ENCODE measurements at regions of chr2 and their contacts with region 1.

Region 1: DNA sequence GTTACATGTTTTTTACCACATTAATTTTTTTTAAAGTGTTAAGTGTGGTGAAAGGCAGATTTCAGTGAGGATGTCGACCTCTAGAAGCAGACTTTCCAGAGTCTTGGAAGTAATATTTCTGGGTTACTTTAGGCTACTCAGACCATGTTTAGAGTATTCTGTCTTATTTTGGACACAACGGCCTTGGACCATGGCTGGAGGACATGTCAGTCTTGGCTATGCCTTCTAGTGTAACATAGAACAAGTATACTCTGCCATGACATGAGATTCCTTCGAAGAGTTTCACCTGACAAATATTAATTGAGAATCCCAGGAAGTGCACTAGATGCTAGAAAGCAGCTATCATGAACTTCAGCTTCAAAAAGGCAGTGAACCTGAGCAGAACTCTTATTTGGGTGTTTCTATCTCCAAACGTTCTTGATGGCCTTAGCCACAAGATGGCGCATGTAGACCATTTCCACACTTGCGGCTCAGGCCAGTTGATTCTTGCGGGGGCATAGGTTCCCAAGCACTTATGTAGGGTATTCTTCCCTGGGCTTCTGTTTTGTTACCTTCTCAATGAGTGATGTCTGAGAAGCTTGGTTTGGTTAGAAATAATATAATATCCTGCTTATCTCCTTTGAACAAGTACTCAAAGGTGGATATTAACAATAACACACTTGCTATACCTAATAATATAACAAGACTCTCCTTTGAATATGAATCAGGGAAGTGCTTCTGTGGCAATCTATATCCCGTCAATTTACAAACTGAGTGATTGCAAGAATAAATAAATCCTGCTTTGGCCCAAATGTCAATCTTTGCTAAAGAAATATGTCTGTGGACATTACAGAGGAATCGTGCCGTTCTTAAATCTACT is 62.0 kb downstream of the CACNB4 start:
- DNase-seq: peak; percentile 45
- H3K4me3 ChIP-seq: no peak overlapping the region
- H3K27ac ChIP-seq: no peak overlapping the region
- H3K27me3 ChIP-seq: peaks cover 18% of the 10 kb centered on the region
- CTCF ChIP-seq: peak; percentile 91

Region 2: DNA sequence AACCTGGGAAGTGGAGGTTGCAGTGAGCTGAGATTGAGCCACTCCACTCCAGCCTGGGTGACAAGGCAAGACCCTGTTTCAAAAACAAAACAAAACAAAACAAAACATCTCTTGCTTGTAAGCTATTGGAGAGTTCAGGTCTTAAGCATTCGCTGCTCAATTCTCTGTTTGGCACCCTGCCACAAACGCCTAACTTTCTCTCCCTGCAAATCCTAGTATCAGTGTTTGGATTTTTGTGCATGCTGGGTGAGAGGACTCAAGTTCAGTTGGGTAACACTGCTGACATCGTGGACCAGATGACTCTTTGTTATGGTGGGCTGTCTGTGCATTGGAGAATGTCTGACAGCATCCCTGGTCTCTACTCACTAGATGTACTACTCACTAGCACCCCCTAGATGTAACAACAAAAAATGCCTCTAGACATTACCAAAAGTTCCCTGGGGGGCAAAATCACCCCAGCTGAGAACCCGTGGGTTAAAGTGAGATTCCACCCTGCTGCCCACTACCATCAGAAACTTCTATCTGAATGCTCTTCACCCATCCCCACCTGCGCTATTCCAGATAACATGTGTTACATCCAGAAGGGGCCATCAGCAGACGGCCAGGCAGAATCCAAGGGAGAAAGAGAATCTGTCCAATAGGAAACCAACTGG is 11.1 kb after region 1 on chr2:
- CTCF ChIA-PET with region 1: interaction called, 20 read pairs
- POLR2A ChIA-PET with region 1: no interaction called
- DNase-seq: no peak
- H3K4me3 ChIP-seq: no peak overlapping the region
- H3K27ac ChIP-seq: no peak overlapping the region
- H3K27me3 ChIP-seq: no peaks in the 10 kb centered on the region
- CTCF ChIP-seq: peak; percentile 35; the same call in 1 of the 2 replicates

Region 3: GRCh38 chr2:152097801-152098495 is 61.1 kb after region 1 on chr2:
- CTCF ChIA-PET with region 1: interaction called, 11 read pairs
- POLR2A ChIA-PET with region 1: no interaction called
- DNase-seq: no peak
- H3K4me3 ChIP-seq: peak overlapping the region; percentile 59
- H3K27ac ChIP-seq: no peak overlapping the region
- H3K27me3 ChIP-seq: peaks cover 46% of the 10 kb centered on the region
- CTCF ChIP-seq: no peak

Region 4: GRCh38 chr2:152166633-152167032 is 129.8 kb after region 1 on chr2:
- CTCF ChIA-PET with region 1: interaction called, 36 read pairs
- POLR2A ChIA-PET with region 1: no interaction called
- DNase-seq: no peak
- H3K4me3 ChIP-seq: no peak overlapping the region; the same call in 1 of the 2 replicates
- H3K27ac ChIP-seq: no peak overlapping the region
- H3K27me3 ChIP-seq: no peaks in the 10 kb centered on the region
- CTCF ChIP-seq: no peak

Measured in AG04450 (cell line).